Naive thymus-derived CD8-positive, alpha-beta T cell (primary cell): ENCODE measurements at regions of chr2 and their contacts with region 1.

Region 1: GRCh38 chr2:230319211-230319862 is 7.7 kb upstream of the SP140L start:
- DNase-seq: peak; percentile 24 to 94 (median 82)
- ATAC-seq: peak; percentile 94 to 97
- H3K4me3 Mint-ChIP-seq: peak overlapping the region; percentile 55 to 84 (median 74)
- H3K27ac Mint-ChIP-seq: peak overlapping the region; percentile 48 to 97 (median 90)
- H3K4me1 Mint-ChIP-seq: peaks cover 31 to 87% (median 79%) of the 10 kb centered on the region in 4 donors
- H3K27me3 Mint-ChIP-seq: no peaks in the 10 kb centered on the region

Region 2: DNA sequence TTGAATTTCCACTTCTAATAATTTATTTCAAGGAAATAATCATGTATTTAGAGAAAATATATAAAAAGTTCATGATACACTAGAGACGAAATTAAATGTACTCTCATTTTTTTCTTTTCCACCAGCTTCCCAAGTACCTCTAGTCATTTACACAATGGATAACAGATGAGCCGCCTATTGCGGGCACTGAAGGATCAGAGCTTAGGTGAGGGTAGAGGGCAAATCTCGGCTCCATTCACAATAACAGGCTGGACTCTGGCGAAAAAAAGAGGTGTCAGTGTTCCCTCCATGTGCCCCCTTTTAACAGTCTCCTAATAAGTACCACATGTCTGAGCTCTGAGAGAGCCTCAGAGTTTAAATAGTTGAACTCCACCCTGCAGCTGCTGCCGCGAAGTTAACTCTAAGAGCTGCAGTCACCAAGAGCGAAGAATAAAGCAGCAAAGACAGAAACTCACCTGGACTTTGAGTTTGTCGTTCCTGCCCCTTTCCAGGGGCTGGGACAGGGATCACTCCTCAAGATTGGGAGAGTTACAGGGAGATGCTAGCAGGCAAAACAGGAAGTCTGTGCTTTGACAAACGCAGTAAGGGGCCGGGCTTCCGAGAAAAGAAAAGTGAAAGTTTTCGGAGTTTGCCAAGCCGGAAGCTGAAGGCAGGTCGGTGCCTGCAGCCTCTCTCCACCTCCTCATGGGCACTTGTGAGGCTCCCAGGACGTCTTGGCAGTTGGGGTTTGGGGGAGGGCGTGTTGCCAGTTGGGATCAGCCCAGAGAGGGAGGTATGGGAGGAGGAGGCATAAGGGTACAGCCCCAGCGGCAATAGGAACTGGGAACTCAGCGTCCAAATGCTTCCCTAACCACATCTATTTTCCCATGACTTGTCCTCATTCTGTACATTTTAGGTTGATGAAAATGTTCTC is 99.7 kb before region 1 on chr2 and contains the start of gene SP110:
- POLR2A ChIA-PET with region 1: interaction called, 21 read pairs
- DNase-seq: peak; percentile 49 to 87 (median 75)
- ATAC-seq: peak; percentile 94 to 95
- H3K4me3 Mint-ChIP-seq: peak within 1 kb of the TSS; percentile 97 to 100 (median 98)
- H3K27ac Mint-ChIP-seq: peak within 1 kb of the TSS; percentile 97 to 100 (median 99)
- H3K4me1 Mint-ChIP-seq: peaks cover 36 to 83% (median 59%) of the 10 kb centered on the region in 4 donors
- H3K27me3 Mint-ChIP-seq: no peaks in the 10 kb centered on the region
- polyA plus RNA-seq, gene SP110: 82.8 to 115 (median 112) TPM

Region 3: GRCh38 chr2:230416061-230416721 is 96.9 kb after region 1 on chr2 and contains the start of gene SP100:
- POLR2A ChIA-PET with region 1: interaction called, 10 read pairs
- DNase-seq: peak; percentile 56 to 88 (median 76)
- ATAC-seq: peak; percentile 80 to 82
- H3K4me3 Mint-ChIP-seq: peak within 1 kb of the TSS; percentile 91 to 99 (median 94)
- H3K27ac Mint-ChIP-seq: peak within 1 kb of the TSS; percentile 96 to 100 (median 99)
- H3K4me1 Mint-ChIP-seq: peaks cover 44 to 92% (median 76%) of the 10 kb centered on the region in 4 donors
- H3K27me3 Mint-ChIP-seq: no peaks in the 10 kb centered on the region
- polyA plus RNA-seq, gene SP100: 81.0 to 174 (median 91.1) TPM